ENCODE measurements at regions of chr12 and their contacts with region 1.

Region 1: GRCh38 chr12:65306366-65307168 is 28.1 kb downstream of the MSRB3 start:
- DNase-seq: peak; percentile 63 to 80 (median 75)
- ATAC-seq: peak; percentile 86 to 95 (median 94)
- H3K4me3 ChIP-seq: no peak overlapping the region
- H3K27ac ChIP-seq: peak overlapping the region in 9 of 12 donors; percentile 3 to 61 (median 22)
- H3K4me1 ChIP-seq: peaks cover 0 to 62% (median 43%) of the 10 kb centered on the region in 12 donors
- H3K27me3 ChIP-seq: no peaks in the 10 kb centered on the region
- CTCF ChIP-seq: peak; percentile 26 to 59 (median 46)
- POLR2A ChIP-seq: no peak

Region 2: DNA sequence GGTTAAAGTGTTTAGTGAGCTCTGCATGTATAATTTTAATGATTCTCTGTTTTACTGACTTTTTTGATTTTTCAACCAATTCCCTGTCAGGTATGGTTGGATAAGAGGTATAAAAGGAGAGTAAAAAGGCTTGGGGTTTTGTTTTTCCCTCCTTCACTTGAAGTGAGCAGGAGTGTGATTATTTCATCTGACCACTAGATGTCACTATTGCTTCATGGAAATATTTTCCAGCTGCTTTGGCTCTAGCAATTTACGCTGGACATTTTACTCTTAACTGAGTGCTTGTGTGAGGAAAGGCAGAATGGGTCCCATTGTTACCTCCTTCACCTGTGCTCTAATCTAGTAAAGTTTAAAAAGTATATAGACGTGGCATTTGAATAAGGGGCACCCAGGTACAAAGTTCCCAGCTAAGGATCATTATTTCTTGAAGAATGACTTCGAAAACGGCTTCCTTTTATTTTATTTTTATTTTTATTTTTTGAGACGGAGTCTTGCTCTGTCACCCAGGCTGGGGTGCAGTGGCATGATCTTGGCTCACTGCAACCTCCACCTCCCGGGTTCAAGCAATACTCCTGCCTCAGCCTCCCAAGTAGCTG is 415.6 kb before region 1 on chr12:
- intact Hi-C with region 1: no loop called
- DNase-seq: no peak
- ATAC-seq: peak in 3 of 4 donors; percentile 53 to 64 (median 61)
- H3K4me3 ChIP-seq: no peak overlapping the region
- H3K27ac ChIP-seq: no peak overlapping the region
- H3K4me1 ChIP-seq: no peaks in the 10 kb centered on the region
- H3K27me3 ChIP-seq: peaks cover 0 to 11% (median 0%) of the 10 kb centered on the region in 9 donors
- CTCF ChIP-seq: peak; percentile 71 to 90 (median 80)
- POLR2A ChIP-seq: no peak

Region 3: GRCh38 chr12:65055859-65056258 is 250.7 kb before region 1 on chr12:
- intact Hi-C with region 1: no loop called
- DNase-seq: no peak
- ATAC-seq: no peak
- H3K4me3 ChIP-seq: no peak overlapping the region
- H3K27ac ChIP-seq: no peak overlapping the region
- H3K4me1 ChIP-seq: no peaks in the 10 kb centered on the region
- H3K27me3 ChIP-seq: peaks cover 0 to 25% (median 0%) of the 10 kb centered on the region in 9 donors
- CTCF ChIP-seq: no peak
- POLR2A ChIP-seq: no peak

Region 4: DNA sequence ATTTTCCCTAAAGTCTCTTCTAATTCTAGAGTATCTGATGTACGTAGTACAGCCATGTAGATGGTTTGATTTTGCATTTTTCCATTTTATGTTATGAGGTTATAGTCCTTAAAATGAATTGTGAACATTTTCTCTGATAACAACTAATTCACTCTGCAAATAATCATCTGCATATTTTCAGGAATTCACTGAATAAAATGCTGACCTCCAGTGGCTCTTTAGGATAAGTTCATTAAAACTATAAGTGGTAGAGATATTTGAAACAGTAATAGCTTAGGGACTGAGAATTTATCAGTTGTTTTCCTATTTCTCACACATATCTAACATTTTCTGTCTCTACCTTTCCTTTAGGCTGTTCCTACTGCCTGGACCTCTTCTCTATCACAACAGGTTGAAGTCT is 23.7 kb before region 1 on chr12:
- intact Hi-C with region 1: no loop called
- DNase-seq: no peak
- ATAC-seq: no peak
- H3K4me3 ChIP-seq: no peak overlapping the region
- H3K27ac ChIP-seq: no peak overlapping the region
- H3K4me1 ChIP-seq: peaks cover 0 to 47% (median 28%) of the 10 kb centered on the region in 12 donors
- H3K27me3 ChIP-seq: peaks cover 0 to 7% (median 0%) of the 10 kb centered on the region in 9 donors
- CTCF ChIP-seq: no peak
- POLR2A ChIP-seq: no peak

Region 5: DNA sequence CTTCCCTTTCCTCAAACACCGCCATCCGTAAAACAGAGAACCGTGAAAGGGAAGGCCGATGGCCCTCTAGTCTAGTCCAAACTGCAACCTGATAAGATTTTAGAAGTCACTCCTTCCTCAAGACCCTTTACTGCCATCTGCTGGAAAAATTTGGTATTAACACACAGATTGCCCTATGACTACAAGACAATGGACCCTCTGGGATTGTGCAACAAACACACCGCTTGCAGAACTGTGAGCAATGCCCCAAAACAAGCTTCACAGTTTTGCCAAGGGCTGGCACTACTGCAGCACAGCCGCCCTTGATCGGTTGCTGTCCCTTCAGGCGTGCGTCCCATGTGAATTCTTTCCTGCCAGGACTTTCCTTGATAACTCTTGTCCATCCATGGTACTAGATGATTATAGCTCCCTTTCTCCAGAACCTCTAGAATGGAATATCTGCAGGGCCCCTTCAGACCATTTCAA is 800.9 kb after region 1 on chr12:
- intact Hi-C with region 1: loop called in 1 of 10 experiments (anchors 10 kb)
- DNase-seq: peak in 3 of 5 donors; percentile 34 to 37 (median 36)
- ATAC-seq: peak in 3 of 4 donors; percentile 75 to 87 (median 83)
- H3K4me3 ChIP-seq: no peak overlapping the region
- H3K27ac ChIP-seq: no peak overlapping the region
- H3K4me1 ChIP-seq: peaks cover 0 to 6% (median 0%) of the 10 kb centered on the region in 12 donors
- H3K27me3 ChIP-seq: no peaks in the 10 kb centered on the region
- CTCF ChIP-seq: peak; percentile 63 to 87 (median 80)
- POLR2A ChIP-seq: no peak